Activated CD4-positive, alpha-beta memory T cell treated with anti-CD3 and anti-CD28 coated beads for 36 hours (primary cell): ENCODE measurements at regions of chr20 and their contacts with region 1.

Region 1: DNA sequence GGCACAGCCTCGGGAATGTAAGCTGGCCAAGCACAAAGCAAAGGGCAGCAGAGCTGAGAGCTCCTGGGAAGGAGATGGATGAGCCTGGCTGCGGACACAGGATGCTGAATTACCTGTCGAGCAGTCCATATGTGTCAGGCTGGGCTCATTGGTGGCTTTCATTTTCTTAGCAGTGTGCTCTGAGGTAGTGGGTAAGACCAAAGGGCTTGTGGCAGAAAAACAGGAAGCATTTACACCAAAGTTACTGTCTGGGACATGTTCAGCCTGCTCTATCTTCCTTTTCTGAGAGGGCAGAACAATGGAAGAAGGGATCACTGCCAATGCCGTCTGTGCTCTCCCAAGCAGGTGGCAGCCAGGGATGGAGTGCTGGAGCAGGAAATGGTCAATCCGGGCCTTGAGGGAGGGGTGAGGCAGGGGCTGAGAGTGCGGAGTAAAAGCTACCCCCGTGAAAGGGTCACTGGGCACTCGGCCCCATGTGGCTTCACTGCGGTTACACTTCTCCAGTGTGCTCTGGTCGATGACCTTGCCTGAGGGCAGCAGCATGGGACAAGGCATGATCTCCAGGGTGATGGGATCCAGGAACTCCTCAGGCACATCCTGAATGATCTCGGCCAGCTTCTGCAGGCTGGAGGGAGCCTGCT is 36.9 kb upstream of the AVP start:
- DNase-seq: no peak
- H3K4me3 Mint-ChIP-seq: no peak overlapping the region
- H3K27ac Mint-ChIP-seq: peak overlapping the region; percentile 61
- H3K4me1 Mint-ChIP-seq: peaks cover 33% of the 10 kb centered on the region
- H3K27me3 Mint-ChIP-seq: no peaks in the 10 kb centered on the region

Region 2: DNA sequence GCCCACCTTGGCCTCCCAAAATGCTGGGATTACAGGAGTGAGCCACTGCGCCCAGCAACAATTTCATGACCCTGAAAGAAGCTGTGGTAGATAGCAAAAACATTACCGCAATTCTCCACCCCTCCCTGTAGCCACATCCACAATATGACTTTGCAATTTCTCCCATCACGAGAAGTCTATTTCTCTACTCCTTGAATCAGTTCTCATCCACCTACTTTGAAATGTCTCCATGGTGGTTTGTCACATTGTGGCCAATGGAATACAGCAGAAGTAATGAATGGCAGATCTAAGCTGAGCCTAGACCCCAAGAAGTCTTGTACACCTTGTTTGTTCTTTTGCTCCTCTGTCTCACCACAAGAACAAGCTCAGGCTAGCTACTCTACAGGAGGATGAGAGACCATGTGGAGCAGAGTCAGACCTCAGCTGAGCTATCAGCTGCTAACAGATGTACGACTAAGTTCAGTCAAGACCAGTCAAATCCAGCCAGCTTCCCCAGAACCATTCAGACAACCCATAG is 43.7 kb before region 1 on chr20:
- CTCF ChIA-PET with region 1: no interaction called
- POLR2A ChIA-PET with region 1: no interaction called
- intact Hi-C with region 1: loop called (anchors 5 kb)
- DNase-seq: peak; percentile 29
- H3K4me3 Mint-ChIP-seq: no peak overlapping the region
- H3K27ac Mint-ChIP-seq: no peak overlapping the region
- H3K4me1 Mint-ChIP-seq: peaks cover 27% of the 10 kb centered on the region
- H3K27me3 Mint-ChIP-seq: peaks cover 28% of the 10 kb centered on the region

Region 3: GRCh38 chr20:3109350-3110302 is 11.8 kb before region 1 on chr20:
- CTCF ChIA-PET with region 1: no interaction called
- POLR2A ChIA-PET with region 1: no interaction called
- intact Hi-C with region 1: no loop called
- DNase-seq: no peak
- H3K4me3 Mint-ChIP-seq: no peak overlapping the region
- H3K27ac Mint-ChIP-seq: no peak overlapping the region
- H3K4me1 Mint-ChIP-seq: no peaks in the 10 kb centered on the region
- H3K27me3 Mint-ChIP-seq: no peaks in the 10 kb centered on the region

Region 4: GRCh38 chr20:3135507-3136070 is 14.2 kb after region 1 on chr20:
- CTCF ChIA-PET with region 1: interaction called, 5 read pairs
- POLR2A ChIA-PET with region 1: no interaction called
- intact Hi-C with region 1: loop called (anchors 2 kb)
- DNase-seq: peak; percentile 55
- H3K4me3 Mint-ChIP-seq: no peak overlapping the region
- H3K27ac Mint-ChIP-seq: no peak overlapping the region
- H3K4me1 Mint-ChIP-seq: peaks cover 23% of the 10 kb centered on the region
- H3K27me3 Mint-ChIP-seq: no peaks in the 10 kb centered on the region